ENCODE measurements at regions of chr17 and their contacts with region 1.

Region 1: DNA sequence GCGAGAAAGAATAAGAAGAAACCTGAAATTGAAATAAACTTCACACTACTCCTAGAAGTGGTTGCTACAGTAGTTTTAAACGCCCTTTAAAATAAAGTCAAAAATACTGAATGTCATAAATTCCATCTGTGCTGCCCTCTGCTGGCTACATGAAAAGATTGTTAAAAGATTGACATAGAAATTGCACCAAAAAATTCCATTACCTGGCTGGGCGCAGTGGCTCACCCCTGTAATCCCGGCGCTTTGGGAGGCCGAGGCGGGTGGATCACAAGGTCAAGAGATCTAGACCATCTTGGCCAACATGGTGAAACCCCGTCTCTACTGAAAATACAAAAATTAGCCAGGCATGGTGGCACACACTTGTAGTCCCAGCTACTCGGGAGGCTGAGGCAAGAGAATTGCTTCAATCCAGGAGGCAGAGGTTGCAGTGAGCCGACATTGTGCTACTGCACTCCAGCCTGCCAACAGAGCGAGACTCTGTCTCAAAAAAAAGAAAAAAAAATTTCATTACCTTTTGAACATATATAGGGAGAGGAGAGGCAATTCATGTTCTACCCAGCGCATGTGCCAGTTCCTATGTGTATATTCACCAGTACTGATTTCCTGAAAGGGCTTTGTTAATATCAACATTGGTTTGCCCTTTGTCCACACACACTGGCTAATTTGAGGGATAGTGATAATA is 36.5 kb downstream of the CYTH1 start:
- DNase-seq: no peak
- ATAC-seq: no peak
- H3K4me3 ChIP-seq: no peak overlapping the region
- H3K27ac ChIP-seq: 0 out of 2 replicates have a peak overlapping the region, but pooled peaks have one; percentile 20
- H3K4me1 ChIP-seq: peaks cover 72% of the 10 kb centered on the region
- H3K27me3 ChIP-seq: no peaks in the 10 kb centered on the region
- CTCF ChIP-seq: peak; percentile 35 to 51 (median 42); a peak in 4 of 6 replicates
- EP300 ChIP-seq: no peak
- POLR2A ChIP-seq: no peak
- RAD21 ChIP-seq: peak; percentile 55

Region 2: DNA sequence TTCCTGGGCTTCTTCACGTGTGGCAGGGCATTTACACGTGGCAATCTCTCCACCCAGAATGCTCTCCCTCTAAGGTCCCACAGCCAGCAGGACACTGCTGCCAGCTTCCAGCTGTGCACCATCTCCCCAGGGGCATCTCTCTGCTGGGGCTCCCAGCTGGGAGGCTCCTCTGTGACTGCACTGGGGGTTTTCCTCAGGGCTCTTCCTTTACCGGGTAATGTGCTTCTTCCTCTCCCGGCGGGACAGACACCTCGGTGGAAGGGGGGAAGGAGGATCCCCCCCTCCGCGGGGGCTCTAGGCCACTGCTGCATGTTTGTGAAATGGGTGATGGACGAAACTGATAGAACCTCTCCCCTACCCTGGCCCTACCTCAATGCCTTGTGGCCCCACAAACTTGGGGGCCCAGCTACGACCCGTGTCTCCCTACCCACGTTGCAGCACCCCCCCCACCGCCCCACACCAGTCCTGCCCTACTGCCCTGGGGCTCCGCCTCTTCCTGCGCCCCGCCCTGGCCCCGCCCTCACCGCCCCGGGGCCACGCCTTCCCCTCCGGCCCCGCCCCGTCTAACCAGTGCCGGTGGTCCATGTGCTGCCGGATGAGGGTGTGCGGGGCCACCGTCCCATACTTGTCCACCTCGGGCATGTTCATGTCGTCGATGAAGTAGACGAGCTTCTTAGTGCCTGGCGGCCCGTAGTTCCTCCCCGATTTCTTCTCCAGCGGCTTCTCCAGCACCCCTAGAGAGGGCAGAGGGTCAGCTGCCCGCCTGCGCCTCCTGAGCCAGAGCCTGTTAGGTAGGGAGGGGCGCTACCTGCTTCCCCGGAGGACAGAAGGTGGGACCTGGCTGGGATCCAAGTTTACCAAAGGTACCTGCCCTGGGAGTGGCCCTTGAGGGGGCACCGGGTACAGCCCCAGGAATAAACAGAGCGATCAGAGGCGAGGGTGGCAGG is 261.0 kb before region 1 on chr17:
- CTCF ChIA-PET with region 1: no interaction called
- POLR2A ChIA-PET with region 1: no interaction called
- RAD21 ChIA-PET with region 1: no interaction called
- SMC1A ChIA-PET with region 1: no interaction called
- in situ Hi-C with region 1: no loop called
- intact Hi-C with region 1: no loop called
- DNase-seq: no peak
- ATAC-seq: peak; percentile 99
- H3K4me3 ChIP-seq: peak overlapping the region; percentile 79
- H3K27ac ChIP-seq: peak overlapping the region; percentile 89
- H3K4me1 ChIP-seq: peaks cover 9% of the 10 kb centered on the region
- H3K27me3 ChIP-seq: no peaks in the 10 kb centered on the region
- CTCF ChIP-seq: no peak
- EP300 ChIP-seq: no peak
- POLR2A ChIP-seq: peak; percentile 69
- RAD21 ChIP-seq: no peak

Region 3: DNA sequence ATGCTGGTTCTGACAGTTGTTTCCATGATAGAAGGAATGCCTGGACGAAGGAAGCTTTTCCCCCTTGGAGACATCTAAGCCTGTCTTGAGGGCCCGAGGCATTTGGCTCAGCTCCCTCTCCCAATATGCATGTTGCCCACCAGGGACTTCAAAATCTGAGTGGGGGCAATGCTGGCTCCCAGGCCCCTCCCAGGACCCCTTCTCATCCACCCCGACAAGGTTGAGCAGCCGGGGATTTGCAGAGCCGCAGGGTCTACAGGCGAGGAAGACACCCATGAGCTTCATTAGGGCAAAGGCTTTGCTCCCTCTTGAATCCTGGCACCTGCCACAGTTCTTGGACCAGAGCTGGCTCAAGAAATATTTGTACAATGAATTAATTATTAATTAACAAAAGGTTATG is 143.3 kb before region 1 on chr17:
- CTCF ChIA-PET with region 1: no interaction called
- POLR2A ChIA-PET with region 1: no interaction called
- RAD21 ChIA-PET with region 1: no interaction called
- SMC1A ChIA-PET with region 1: no interaction called
- in situ Hi-C with region 1: no loop called
- intact Hi-C with region 1: no loop called
- DNase-seq: no peak
- ATAC-seq: no peak
- H3K4me3 ChIP-seq: no peak overlapping the region
- H3K27ac ChIP-seq: no peak overlapping the region
- H3K4me1 ChIP-seq: no peaks in the 10 kb centered on the region
- H3K27me3 ChIP-seq: no peaks in the 10 kb centered on the region
- CTCF ChIP-seq: no peak
- EP300 ChIP-seq: no peak
- POLR2A ChIP-seq: no peak
- RAD21 ChIP-seq: no peak

Region 4: GRCh38 chr17:78697554-78698343 is 47.8 kb before region 1 on chr17:
- CTCF ChIA-PET with region 1: interaction called, 6 read pairs
- POLR2A ChIA-PET with region 1: interaction called, 3 read pairs
- RAD21 ChIA-PET with region 1: interaction called, 9 read pairs
- SMC1A ChIA-PET with region 1: interaction called, 23 read pairs
- in situ Hi-C with region 1: no loop called
- intact Hi-C with region 1: no loop called
- DNase-seq: no peak
- ATAC-seq: peak; percentile 67
- H3K4me3 ChIP-seq: peak overlapping the region; percentile 25; the same call in 1 of the 2 replicates
- H3K27ac ChIP-seq: peak overlapping the region; percentile 97
- H3K4me1 ChIP-seq: peaks cover 55% of the 10 kb centered on the region
- H3K27me3 ChIP-seq: no peaks in the 10 kb centered on the region
- CTCF ChIP-seq: no peak
- EP300 ChIP-seq: no peak
- POLR2A ChIP-seq: peak; percentile 66
- RAD21 ChIP-seq: no peak

Region 5: DNA sequence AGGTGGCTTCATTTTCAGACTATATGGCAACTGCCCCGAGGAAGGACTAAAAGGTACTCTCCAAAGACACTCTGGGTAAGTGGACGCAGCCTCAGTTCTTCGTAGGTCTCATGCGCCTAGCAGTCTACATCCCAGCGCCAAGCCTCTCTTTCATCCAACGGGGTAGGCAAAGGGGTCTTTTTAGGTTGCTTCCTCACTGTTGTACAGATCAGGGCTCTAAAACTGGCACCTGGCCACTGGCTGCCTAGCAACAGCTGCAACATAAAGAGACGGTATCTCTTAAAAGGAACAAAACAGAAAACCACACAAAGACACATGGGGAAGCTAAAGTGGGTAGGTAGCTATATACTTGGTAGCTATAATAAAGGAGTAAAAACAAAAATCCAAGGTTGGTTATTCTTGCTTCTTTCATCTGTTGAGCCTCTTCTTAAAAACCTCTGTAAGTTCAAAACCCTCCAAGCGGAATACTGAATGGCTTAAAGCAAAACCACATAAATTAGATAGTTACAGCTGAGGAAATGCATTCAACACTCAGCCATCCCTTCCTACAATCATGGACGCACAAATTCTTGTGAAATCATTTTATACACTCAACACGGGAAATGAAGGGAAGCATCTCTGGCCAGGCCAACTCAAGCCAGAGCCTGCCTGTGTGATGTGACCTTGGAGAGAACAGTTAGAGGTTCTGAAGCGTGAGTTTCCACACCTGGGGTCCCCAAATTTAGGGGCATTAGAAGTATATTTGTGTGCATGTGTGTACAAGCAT is 13.8 kb after region 1 on chr17:
- CTCF ChIA-PET with region 1: interaction called, 9 read pairs
- POLR2A ChIA-PET with region 1: interaction called, 131 read pairs
- RAD21 ChIA-PET with region 1: interaction called, 11 read pairs
- SMC1A ChIA-PET with region 1: interaction called, 31 read pairs
- in situ Hi-C with region 1: no loop called
- intact Hi-C with region 1: no loop called
- DNase-seq: no peak
- ATAC-seq: peak; percentile 91
- H3K4me3 ChIP-seq: peak overlapping the region; percentile 57; the same call in 1 of the 2 replicates
- H3K27ac ChIP-seq: peak overlapping the region; percentile 74
- H3K4me1 ChIP-seq: peaks cover 43% of the 10 kb centered on the region
- H3K27me3 ChIP-seq: no peaks in the 10 kb centered on the region
- CTCF ChIP-seq: no peak
- EP300 ChIP-seq: peak in 1 of 2 experiments; percentile 70; a peak in 1 of 4 replicates
- POLR2A ChIP-seq: no peak
- RAD21 ChIP-seq: no peak

Region 6: DNA sequence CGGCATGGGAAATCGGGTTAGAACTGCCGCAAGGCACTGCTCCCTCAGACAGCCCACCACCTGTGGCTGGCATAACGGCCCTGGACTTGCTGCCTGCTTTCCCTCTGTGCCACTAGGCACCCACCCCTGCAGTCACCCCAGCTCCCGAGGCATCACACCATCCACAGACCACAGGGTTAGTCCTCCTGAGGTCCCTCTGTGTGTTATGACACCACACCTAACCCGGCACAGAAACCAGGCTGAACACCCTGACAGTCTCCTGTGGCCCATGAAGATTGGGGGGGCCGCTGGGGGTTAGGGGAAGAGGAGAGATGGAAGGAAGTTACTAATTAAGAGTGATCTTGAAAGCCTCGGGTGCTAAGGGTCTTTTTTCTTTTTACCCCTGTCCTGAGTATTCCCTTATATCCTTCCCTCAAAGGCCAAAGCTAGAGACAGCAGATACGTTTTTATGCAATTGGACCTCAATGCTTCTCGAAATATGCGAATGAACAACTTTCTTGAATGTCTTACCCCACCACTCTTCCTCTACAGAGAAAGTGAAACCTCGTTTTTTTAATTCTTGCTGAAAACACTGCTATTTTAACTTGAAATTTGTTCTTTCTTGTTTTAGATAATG is 29.5 kb after region 1 on chr17:
- CTCF ChIA-PET with region 1: interaction called, 76 read pairs
- POLR2A ChIA-PET with region 1: interaction called, 131 read pairs
- RAD21 ChIA-PET with region 1: interaction called, 24 read pairs
- SMC1A ChIA-PET with region 1: interaction called, 18 read pairs
- in situ Hi-C with region 1: no loop called
- intact Hi-C with region 1: loop called (anchors 1 kb)
- DNase-seq: no peak
- ATAC-seq: peak; percentile 69
- H3K4me3 ChIP-seq: peak overlapping the region; percentile 68
- H3K27ac ChIP-seq: peak overlapping the region; percentile 97
- H3K4me1 ChIP-seq: peaks cover 43% of the 10 kb centered on the region
- H3K27me3 ChIP-seq: no peaks in the 10 kb centered on the region
- CTCF ChIP-seq: no peak
- EP300 ChIP-seq: peak in 1 of 2 experiments; percentile 44; a peak in 2 of 4 replicates
- POLR2A ChIP-seq: peak; percentile 81
- RAD21 ChIP-seq: no peak